Naive thymus-derived CD4-positive, alpha-beta T cell (primary cell): ENCODE measurements at regions of chr6 and their contacts with region 1.

Region 1: DNA sequence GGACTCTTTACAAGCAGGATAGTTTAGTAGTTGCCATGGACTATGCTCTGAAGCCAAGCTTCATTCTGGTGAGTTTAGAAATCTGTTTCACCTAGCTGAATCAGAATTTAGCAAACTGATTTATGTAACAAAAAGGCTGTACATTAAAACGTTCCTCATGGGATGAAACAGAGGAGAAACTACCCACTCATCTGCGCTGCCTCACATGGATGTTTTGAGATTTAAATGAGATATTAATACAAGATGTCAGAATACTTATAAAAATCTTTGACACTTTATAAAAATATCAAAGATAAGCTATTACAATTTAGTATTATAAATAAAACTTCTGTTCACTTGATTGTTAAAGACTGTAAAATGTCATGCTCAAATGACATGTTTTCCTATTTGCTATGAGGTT is 16.8 kb downstream of the RUNX2 start:
- DNase-seq: no peak
- ATAC-seq: no peak
- H3K4me3 ChIP-seq: no peak overlapping the region
- H3K4me3 Mint-ChIP-seq: no peak overlapping the region
- H3K27ac ChIP-seq: no peak overlapping the region
- H3K27ac Mint-ChIP-seq: no peak overlapping the region
- H3K4me1 ChIP-seq: no peaks in the 10 kb centered on the region
- H3K4me1 Mint-ChIP-seq: peaks cover 0 to 4% (median 0%) of the 10 kb centered on the region in 7 donors
- H3K27me3 ChIP-seq: no peaks in the 10 kb centered on the region
- H3K27me3 Mint-ChIP-seq: no peaks in the 10 kb centered on the region

Region 2: DNA sequence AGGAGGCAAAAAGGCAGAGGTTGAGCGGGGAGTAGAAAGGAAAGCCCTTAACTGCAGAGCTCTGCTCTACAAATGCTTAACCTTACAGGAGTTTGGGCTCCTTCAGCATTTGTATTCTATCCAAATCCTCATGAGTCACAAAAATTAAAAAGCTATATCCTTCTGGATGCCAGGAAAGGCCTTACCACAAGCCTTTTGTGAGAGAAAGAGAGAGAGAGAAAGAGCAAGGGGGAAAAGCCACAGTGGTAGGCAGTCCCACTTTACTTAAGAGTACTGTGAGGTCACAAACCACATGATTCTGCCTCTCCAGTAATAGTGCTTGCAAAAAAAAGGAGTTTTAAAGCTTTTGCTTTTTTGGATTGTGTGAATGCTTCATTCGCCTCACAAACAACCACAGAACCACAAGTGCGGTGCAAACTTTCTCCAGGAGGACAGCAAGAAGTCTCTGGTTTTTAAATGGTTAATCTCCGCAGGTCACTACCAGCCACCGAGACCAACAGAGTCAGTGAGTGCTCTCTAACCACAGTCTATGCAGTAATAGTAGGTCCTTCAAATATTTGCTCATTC is 16.9 kb before region 1 on chr6 and contains the start of gene RUNX2:
- CTCF ChIA-PET with region 1: interaction called, 4 read pairs
- POLR2A ChIA-PET with region 1: interaction called, 4 read pairs
- intact Hi-C with region 1: loop called in 1 of 2 experiments (anchors 2 kb)
- DNase-seq: peak in 5 of 9 donors; percentile 7 to 20 (median 14)
- ATAC-seq: peak; percentile 74
- H3K4me3 ChIP-seq: peak within 1 kb of the TSS; percentile 25
- H3K4me3 Mint-ChIP-seq: peak within 1 kb of the TSS; percentile 61 to 87 (median 78)
- H3K27ac ChIP-seq: peak within 1 kb of the TSS; percentile 28
- H3K27ac Mint-ChIP-seq: peak within 1 kb of the TSS; percentile 33 to 89 (median 73)
- H3K4me1 ChIP-seq: peaks cover 6 to 28% of the 10 kb centered on the region in 2 donors
- H3K4me1 Mint-ChIP-seq: peaks cover 26 to 85% (median 63%) of the 10 kb centered on the region in 7 donors
- H3K27me3 ChIP-seq: no peaks in the 10 kb centered on the region
- H3K27me3 Mint-ChIP-seq: no peaks in the 10 kb centered on the region
- total RNA-seq, gene RUNX2: 12.8 to 17.9 (median 14.0) TPM